B cell (primary cell): ENCODE measurements at regions of chr9 and their contacts with region 1.

Region 1: GRCh38 chr9:131349881-131350563 is 43.9 kb upstream of the PRRC2B start:
- DNase-seq: peak; percentile 86
- ATAC-seq: peak; percentile 99
- H3K4me3 ChIP-seq: no peak overlapping the region
- H3K4me3 Mint-ChIP-seq: peak overlapping the region; percentile 57
- H3K27ac ChIP-seq: no peak overlapping the region
- H3K27ac Mint-ChIP-seq: no peak overlapping the region
- H3K4me1 ChIP-seq: peaks cover 4 to 9% of the 10 kb centered on the region in 2 donors
- H3K4me1 Mint-ChIP-seq: peaks cover 6% of the 10 kb centered on the region
- H3K27me3 ChIP-seq: peaks cover 0 to 4% (median 0%) of the 10 kb centered on the region in 4 experiments
- H3K27me3 Mint-ChIP-seq: peaks cover 3% of the 10 kb centered on the region
- CTCF ChIP-seq: peak; percentile 89

Region 2: GRCh38 chr9:131092548-131093324 is 257.3 kb before region 1 on chr9:
- CTCF ChIA-PET with region 1: no interaction called
- POLR2A ChIA-PET with region 1: interaction called, 10 read pairs
- intact Hi-C with region 1: no loop called
- DNase-seq: no peak
- ATAC-seq: no peak
- H3K4me3 ChIP-seq: no peak overlapping the region
- H3K4me3 Mint-ChIP-seq: no peak overlapping the region
- H3K27ac ChIP-seq: no peak overlapping the region
- H3K27ac Mint-ChIP-seq: no peak overlapping the region
- H3K4me1 ChIP-seq: peaks cover 5 to 11% of the 10 kb centered on the region in 2 donors
- H3K4me1 Mint-ChIP-seq: peaks cover 12% of the 10 kb centered on the region
- H3K27me3 ChIP-seq: peaks cover 0 to 33% (median 16%) of the 10 kb centered on the region in 4 experiments
- H3K27me3 Mint-ChIP-seq: peaks cover 26% of the 10 kb centered on the region
- CTCF ChIP-seq: no peak

Region 3: GRCh38 chr9:131393622-131394463 is 43.8 kb after region 1 on chr9 and contains the start of gene PRRC2B:
- CTCF ChIA-PET with region 1: no interaction called
- POLR2A ChIA-PET with region 1: no interaction called
- intact Hi-C with region 1: loop called (anchors 5 kb)
- DNase-seq: peak; percentile 91
- ATAC-seq: peak; percentile 64
- H3K4me3 ChIP-seq: peak within 1 kb of the TSS; percentile 53 to 80 (median 72)
- H3K4me3 Mint-ChIP-seq: peak within 1 kb of the TSS; percentile 88
- H3K27ac ChIP-seq: peak within 1 kb of the TSS; percentile 74 to 82
- H3K27ac Mint-ChIP-seq: peak within 1 kb of the TSS; percentile 90
- H3K4me1 ChIP-seq: peaks cover 42 to 47% of the 10 kb centered on the region in 2 donors
- H3K4me1 Mint-ChIP-seq: peaks cover 46% of the 10 kb centered on the region
- H3K27me3 ChIP-seq: no peaks in the 10 kb centered on the region
- H3K27me3 Mint-ChIP-seq: no peaks in the 10 kb centered on the region
- CTCF ChIP-seq: peak; percentile 48
- total RNA-seq, gene PRRC2B: 256 and 268 TPM in 2 replicates

Region 4: DNA sequence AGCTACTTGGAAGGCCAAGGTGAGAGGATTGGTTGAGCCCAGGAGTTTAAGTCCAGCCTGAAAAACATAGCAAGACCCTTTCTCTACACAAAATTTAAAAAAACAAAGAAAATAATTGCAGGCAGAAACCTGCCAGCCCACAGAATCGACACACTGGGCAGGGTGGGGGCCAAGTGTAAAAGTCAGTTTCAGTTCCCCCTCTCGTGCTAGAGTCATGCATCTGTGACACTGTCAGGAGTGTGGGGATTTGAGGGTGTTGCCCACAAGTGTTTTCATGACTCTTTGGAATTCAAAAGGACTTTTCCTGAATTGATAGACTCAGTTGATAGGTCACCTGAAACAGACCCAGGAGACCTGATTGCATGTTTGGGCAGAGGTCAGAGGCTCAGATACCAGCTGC is 91.4 kb after region 1 on chr9:
- CTCF ChIA-PET with region 1: interaction called, 14 read pairs
- POLR2A ChIA-PET with region 1: no interaction called
- intact Hi-C with region 1: loop called (anchors 1 kb)
- DNase-seq: peak; percentile 75
- ATAC-seq: peak; percentile 97
- H3K4me3 ChIP-seq: no peak overlapping the region
- H3K4me3 Mint-ChIP-seq: peak overlapping the region; percentile 11
- H3K27ac ChIP-seq: peak overlapping the region; percentile 13 to 70
- H3K27ac Mint-ChIP-seq: peak overlapping the region; percentile 76
- H3K4me1 ChIP-seq: peaks cover 19% of the 10 kb centered on the region in 2 donors
- H3K4me1 Mint-ChIP-seq: peaks cover 31% of the 10 kb centered on the region
- H3K27me3 ChIP-seq: no peaks in the 10 kb centered on the region
- H3K27me3 Mint-ChIP-seq: no peaks in the 10 kb centered on the region
- CTCF ChIP-seq: no peak

Region 5: GRCh38 chr9:131747356-131747755 is 397.3 kb after region 1 on chr9:
- CTCF ChIA-PET with region 1: interaction called, 35 read pairs
- POLR2A ChIA-PET with region 1: no interaction called
- intact Hi-C with region 1: loop called (anchors 1 kb)
- DNase-seq: peak; percentile 72
- ATAC-seq: peak; percentile 56
- H3K4me3 ChIP-seq: no peak overlapping the region
- H3K4me3 Mint-ChIP-seq: no peak overlapping the region
- H3K27ac ChIP-seq: no peak overlapping the region
- H3K27ac Mint-ChIP-seq: no peak overlapping the region
- H3K4me1 ChIP-seq: peaks cover 17 to 19% of the 10 kb centered on the region in 2 donors
- H3K4me1 Mint-ChIP-seq: peaks cover 32% of the 10 kb centered on the region
- H3K27me3 ChIP-seq: no peaks in the 10 kb centered on the region
- H3K27me3 Mint-ChIP-seq: no peaks in the 10 kb centered on the region
- CTCF ChIP-seq: peak; percentile 64